ENCODE measurements at regions of chr11 and their contacts with region 1.

Region 1: DNA sequence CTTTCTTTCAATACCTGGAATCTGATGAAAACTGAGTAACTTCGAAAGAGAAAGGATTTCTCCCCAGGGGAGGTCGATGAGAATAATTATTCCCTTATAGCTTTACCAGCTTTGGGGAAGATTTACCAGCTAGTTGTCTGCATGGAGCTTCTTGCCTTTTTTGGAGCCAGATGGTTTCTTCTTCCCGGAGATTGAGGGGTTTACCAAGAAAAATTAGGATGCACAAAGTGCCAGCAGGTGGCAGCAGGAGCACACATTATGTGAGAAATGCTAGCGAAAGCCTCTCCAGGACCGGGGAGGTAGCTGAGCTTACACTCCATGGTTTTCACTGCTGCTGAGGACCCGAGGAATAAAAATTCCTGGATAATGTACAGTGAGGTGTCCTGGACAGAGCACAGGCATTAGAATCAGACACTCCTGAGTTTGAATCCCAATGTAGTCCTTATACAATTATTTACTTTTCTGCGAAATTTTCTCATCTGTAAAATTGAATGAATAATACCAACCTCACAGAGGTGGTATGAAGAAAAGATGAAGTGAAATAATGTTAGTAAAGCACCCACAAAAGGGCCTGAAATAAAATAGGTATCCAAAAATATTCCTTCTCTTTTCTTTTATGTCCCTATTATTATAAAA is 46.0 kb upstream of the PARVA start:
- DNase-seq: peak; percentile 72
- ATAC-seq: peak; percentile 91
- H3K4me3 ChIP-seq: no peak overlapping the region
- H3K27ac ChIP-seq: no peak overlapping the region
- H3K4me1 ChIP-seq: peaks cover 0 to 2% of the 10 kb centered on the region in 2 experiments; a peak in 1 of 4 replicates
- H3K27me3 ChIP-seq: no peaks in the 10 kb centered on the region
- CTCF ChIP-seq: peak; percentile 67 to 84 (median 80)
- POLR2A ChIP-seq: no peak
- RAD21 ChIP-seq: peak; percentile 94

Region 2: DNA sequence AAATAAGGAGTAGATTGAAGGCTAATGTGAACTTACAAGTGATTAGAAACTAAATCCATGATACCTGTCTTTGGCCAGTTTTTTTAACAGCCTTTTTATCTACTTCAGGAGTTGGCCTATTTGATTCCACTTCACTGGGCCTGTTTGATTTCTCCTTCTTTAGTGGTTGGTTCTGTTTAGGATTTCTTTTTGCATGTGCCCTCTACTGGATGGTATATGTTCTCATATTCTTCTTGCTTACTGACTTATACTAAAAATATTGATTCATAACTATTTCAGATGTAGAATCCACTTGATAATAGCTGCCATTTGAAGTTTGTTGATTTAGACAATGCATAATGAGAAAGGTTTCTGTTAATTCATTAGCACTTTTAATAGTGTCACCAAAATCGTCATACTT is 435.7 kb before region 1 on chr11:
- CTCF ChIA-PET with region 1: no interaction called
- POLR2A ChIA-PET with region 1: no interaction called
- RAD21 ChIA-PET with region 1: no interaction called
- intact Hi-C with region 1: no loop called
- DNase-seq: no peak
- ATAC-seq: peak; percentile 55; the same call in 1 of the 2 replicates
- H3K4me3 ChIP-seq: no peak overlapping the region
- H3K27ac ChIP-seq: no peak overlapping the region
- H3K4me1 ChIP-seq: no peaks in the 10 kb centered on the region
- H3K27me3 ChIP-seq: no peaks in the 10 kb centered on the region
- CTCF ChIP-seq: peak in 2 of 3 experiments; percentile 10 to 27; a peak in 2 of 6 replicates
- POLR2A ChIP-seq: no peak
- RAD21 ChIP-seq: peak; percentile 18; the same call in 1 of the 2 replicates

Region 3: DNA sequence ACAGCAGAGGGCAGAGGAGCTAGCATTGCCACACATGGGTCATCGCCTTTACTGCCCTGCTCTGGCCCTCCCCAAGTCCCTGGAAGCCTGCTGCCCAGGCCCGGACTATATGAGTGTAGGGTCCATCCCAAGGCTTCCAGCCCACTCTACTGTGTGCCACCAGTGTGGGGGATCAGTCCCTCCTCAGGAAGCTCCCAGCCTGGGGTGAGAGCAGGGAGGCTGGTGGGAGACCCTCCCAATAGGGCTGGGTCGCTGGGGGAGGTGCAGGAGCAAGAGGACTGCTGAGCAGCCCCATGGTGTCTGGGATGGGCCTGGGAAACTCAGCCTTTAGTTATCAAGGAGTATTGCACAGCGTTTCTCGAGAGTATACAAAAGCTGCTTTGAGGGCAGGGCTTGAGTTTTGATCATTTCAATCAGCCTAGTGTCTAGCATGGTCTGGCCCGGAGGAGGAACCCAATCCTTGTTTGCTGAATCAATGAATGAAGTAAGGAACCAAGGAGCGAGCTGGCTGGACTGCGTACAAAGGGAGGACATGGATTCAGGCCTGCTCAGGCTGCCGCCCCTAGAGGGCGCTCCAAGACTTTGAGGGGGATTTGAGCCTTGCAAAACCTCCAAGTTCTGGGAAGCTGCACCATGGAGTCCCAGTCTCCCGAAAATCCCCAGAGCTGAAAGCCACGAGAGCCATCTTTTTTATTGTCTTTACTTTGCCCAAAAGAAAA is 43.0 kb before region 1 on chr11:
- CTCF ChIA-PET with region 1: interaction called, 23 read pairs
- POLR2A ChIA-PET with region 1: interaction called, 5 read pairs
- RAD21 ChIA-PET with region 1: interaction called, 3 to 5 read pairs
- intact Hi-C with region 1: no loop called
- DNase-seq: peak; percentile 71
- ATAC-seq: peak; percentile 54
- H3K4me3 ChIP-seq: peak overlapping the region; percentile 20 to 50; a peak in 2 of 4 replicates
- H3K27ac ChIP-seq: peak overlapping the region; percentile 62
- H3K4me1 ChIP-seq: peaks cover 25 to 39% of the 10 kb centered on the region in 2 experiments
- H3K27me3 ChIP-seq: no peaks in the 10 kb centered on the region
- CTCF ChIP-seq: peak; percentile 83 to 96 (median 95)
- POLR2A ChIP-seq: no peak
- RAD21 ChIP-seq: peak; percentile 95

Region 4: DNA sequence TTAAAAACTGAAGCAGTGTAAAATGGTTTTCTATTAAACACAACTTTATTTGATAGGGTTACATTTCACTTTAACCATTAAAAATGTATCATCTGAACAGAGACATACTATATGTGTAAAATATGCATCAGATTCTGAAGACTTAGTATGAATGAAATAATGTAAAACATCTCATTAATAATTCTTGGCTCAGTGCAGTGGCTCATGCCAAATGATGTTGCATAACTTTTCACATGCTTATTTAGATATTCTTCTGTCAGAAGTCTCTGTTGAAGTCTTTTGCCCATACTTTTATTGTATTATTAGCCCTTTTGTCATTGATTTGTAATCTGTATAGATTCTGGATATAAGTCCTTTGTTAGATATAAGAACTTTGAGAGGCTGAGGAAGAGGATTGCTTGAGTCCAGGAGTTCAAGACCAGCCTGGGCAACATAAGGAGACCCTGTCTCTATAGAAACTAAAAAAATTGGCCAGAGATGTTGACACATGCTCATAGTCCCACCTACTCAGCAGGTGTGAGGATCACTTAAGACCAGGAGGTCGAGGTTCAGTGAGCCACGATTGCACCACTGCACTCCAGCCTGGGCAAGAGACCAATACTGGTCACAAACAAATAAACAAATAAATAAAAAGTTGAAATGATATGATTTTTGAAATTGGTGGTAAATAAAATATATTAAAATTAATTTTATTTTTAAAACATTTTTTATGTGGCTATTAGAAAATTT is 27.8 kb before region 1 on chr11:
- CTCF ChIA-PET with region 1: no interaction called
- POLR2A ChIA-PET with region 1: no interaction called
- RAD21 ChIA-PET with region 1: no interaction called
- intact Hi-C with region 1: no loop called
- DNase-seq: no peak
- ATAC-seq: no peak
- H3K4me3 ChIP-seq: no peak overlapping the region
- H3K27ac ChIP-seq: no peak overlapping the region
- H3K4me1 ChIP-seq: no peaks in the 10 kb centered on the region
- H3K27me3 ChIP-seq: no peaks in the 10 kb centered on the region
- CTCF ChIP-seq: no peak
- POLR2A ChIP-seq: no peak
- RAD21 ChIP-seq: no peak

Region 5: GRCh38 chr11:12485328-12485727 is 154.0 kb after region 1 on chr11:
- CTCF ChIA-PET with region 1: no interaction called
- POLR2A ChIA-PET with region 1: no interaction called
- RAD21 ChIA-PET with region 1: no interaction called
- intact Hi-C with region 1: loop called (anchors 2 kb)
- DNase-seq: no peak
- ATAC-seq: peak; percentile 49
- H3K4me3 ChIP-seq: no peak overlapping the region
- H3K27ac ChIP-seq: no peak overlapping the region
- H3K4me1 ChIP-seq: no peaks in the 10 kb centered on the region
- H3K27me3 ChIP-seq: no peaks in the 10 kb centered on the region
- CTCF ChIP-seq: peak in 2 of 3 experiments; percentile 34 to 51; a peak in 4 of 6 replicates
- POLR2A ChIP-seq: no peak
- RAD21 ChIP-seq: peak; percentile 43

Region 6: GRCh38 chr11:12888525-12889158 is 557.3 kb after region 1 on chr11:
- CTCF ChIA-PET with region 1: interaction called, 47 read pairs
- POLR2A ChIA-PET with region 1: no interaction called
- RAD21 ChIA-PET with region 1: interaction called, 4 to 5 read pairs
- intact Hi-C with region 1: loop called (anchors 1 kb)
- DNase-seq: peak; percentile 48
- ATAC-seq: peak; percentile 90
- H3K4me3 ChIP-seq: no peak overlapping the region
- H3K27ac ChIP-seq: no peak overlapping the region
- H3K4me1 ChIP-seq: no peaks in the 10 kb centered on the region
- H3K27me3 ChIP-seq: no peaks in the 10 kb centered on the region
- CTCF ChIP-seq: peak; percentile 67 to 81 (median 80)
- POLR2A ChIP-seq: no peak
- RAD21 ChIP-seq: peak; percentile 91

Region 7: GRCh38 chr11:13152736-13153533 is 821.6 kb after region 1 on chr11:
- CTCF ChIA-PET with region 1: no interaction called
- POLR2A ChIA-PET with region 1: no interaction called
- RAD21 ChIA-PET with region 1: no interaction called
- intact Hi-C with region 1: loop called (anchors 10 kb)
- DNase-seq: no peak
- ATAC-seq: 0 out of 2 replicates have a peak, but pooled peaks have one; percentile 46
- H3K4me3 ChIP-seq: no peak overlapping the region
- H3K27ac ChIP-seq: no peak overlapping the region
- H3K4me1 ChIP-seq: peaks cover 0 to 11% of the 10 kb centered on the region in 2 experiments; a peak in 1 of 4 replicates
- H3K27me3 ChIP-seq: no peaks in the 10 kb centered on the region
- CTCF ChIP-seq: peak; percentile 51 to 84 (median 55); a peak in 5 of 6 replicates
- POLR2A ChIP-seq: no peak
- RAD21 ChIP-seq: peak; percentile 84

Measured in HCT116 (cell line).